HepG2 (cell line): ENCODE measurements at regions of chr2 and their contacts with region 1.

Region 1: DNA sequence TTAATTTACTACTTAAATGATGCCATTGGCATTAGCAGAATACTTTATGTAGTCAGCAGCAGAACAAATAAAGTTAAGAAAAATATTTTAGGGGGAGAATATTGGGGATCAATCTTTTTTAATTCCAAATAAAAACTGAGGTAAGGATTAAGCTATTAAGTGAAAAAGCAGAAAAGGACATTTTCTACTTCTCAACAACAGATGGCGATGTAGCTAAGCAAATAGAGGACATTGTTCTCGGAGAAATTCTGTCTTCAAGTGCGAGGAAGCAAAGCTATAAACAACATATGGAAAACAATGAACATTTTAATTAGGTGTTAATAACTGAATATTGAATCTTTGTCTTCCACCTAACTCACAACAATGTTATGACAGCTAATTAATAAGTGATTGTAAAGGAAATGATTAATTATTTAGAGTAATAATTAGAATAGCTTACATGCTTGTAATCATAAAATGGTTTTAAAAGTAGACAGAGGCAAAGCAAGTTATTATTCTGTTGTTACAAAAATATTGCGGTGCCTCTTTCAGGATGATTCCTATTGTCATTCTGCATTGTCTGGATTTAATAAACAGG is 32.9 kb upstream of the CCDC93 start:
- DNase-seq: peak; percentile 42
- ATAC-seq: peak; percentile 50; the same call in 1 of the 3 replicates
- H3K4me3 ChIP-seq: peak overlapping the region in 2 of 3 experiments; percentile 19 to 41; a peak in 3 of 6 replicates
- H3K27ac ChIP-seq: no peak overlapping the region
- H3K4me1 ChIP-seq: peaks cover 18% of the 10 kb centered on the region; the same call in 1 of the 2 replicates
- H3K27me3 ChIP-seq: no peaks in the 10 kb centered on the region; a peak in 1 of 5 replicates
- CTCF ChIP-seq: peak; percentile 82
- EP300 ChIP-seq: no peak
- POLR2A ChIP-seq: no peak
- RAD21 ChIP-seq: peak; percentile 70

Region 2: DNA sequence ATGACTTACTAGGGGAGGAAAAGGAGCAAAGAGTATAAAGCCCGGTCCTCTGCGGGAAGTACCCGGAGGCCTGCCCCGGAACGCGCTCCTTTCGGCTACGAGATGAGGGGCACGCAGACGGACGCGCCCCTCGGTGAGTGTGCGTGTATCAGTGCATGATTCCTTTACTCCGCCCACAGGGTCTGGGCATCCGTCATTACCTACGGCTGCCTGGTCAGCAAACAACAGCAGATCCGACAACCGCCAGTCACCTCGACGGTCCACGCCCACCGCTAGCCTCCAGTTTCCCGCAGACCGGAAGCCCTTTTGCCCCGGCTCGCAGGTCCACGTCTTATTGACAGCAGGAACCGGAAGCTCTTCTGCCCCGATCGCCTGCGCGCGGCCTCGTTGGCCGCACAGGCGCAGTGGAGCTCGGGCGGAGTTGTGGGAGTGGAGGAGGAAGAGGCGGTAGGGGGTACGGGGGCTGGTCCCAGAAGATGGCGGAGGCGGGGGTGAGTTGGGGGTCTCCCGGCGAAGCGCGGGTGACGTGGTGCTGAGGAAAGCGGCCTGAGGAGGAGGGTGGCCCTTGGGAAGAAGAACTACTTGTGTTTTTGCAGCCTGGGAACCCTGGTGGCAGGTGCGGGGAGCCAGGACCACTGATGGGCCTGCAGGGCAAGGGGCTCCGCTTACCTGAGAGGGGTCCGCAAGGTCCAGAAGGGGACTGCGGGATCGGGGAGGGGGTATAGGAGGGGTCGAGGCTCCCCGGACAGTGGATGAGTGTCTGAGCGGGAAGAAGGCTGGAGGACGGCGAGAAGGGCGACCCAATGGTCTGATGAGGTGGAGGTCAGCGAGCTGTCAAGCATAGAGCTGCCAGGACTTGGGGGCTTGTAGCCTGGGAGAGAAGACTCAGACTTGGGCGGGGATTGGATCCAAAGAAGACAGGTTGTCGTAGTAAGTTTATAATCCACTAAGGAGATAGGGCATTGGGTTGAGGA is 41.6 kb after region 1 on chr2 and contains the start of gene INSIG2:
- CTCF ChIA-PET with region 1: no interaction called
- POLR2A ChIA-PET with region 1: interaction called, 11 read pairs
- in situ Hi-C with region 1: no loop called
- intact Hi-C with region 1: loop called (anchors 2 kb)
- DNase-seq: peak; percentile 99
- ATAC-seq: peak; percentile 88
- H3K4me3 ChIP-seq: peak within 1 kb of the TSS; percentile 79 to 91 (median 89)
- H3K27ac ChIP-seq: peak within 1 kb of the TSS; percentile 91
- H3K4me1 ChIP-seq: peaks cover 61% of the 10 kb centered on the region
- H3K27me3 ChIP-seq: no peaks in the 10 kb centered on the region; a peak in 1 of 5 replicates
- CTCF ChIP-seq: no peak
- EP300 ChIP-seq: peak in 1 of 2 experiments; percentile 71; a peak in 2 of 4 replicates
- POLR2A ChIP-seq: peak; percentile 83 to 94
- RAD21 ChIP-seq: no peak
- total RNA-seq, gene INSIG2: 54.6 and 73.5 TPM in 2 replicates

Region 3: GRCh38 chr2:118133916-118134315 is 87.2 kb after region 1 on chr2:
- CTCF ChIA-PET with region 1: no interaction called
- POLR2A ChIA-PET with region 1: no interaction called
- in situ Hi-C with region 1: no loop called
- intact Hi-C with region 1: no loop called
- DNase-seq: no peak
- ATAC-seq: no peak
- H3K4me3 ChIP-seq: no peak overlapping the region
- H3K27ac ChIP-seq: no peak overlapping the region
- H3K4me1 ChIP-seq: peaks cover 10% of the 10 kb centered on the region
- H3K27me3 ChIP-seq: no peaks in the 10 kb centered on the region; a peak in 1 of 5 replicates
- CTCF ChIP-seq: no peak
- EP300 ChIP-seq: no peak
- POLR2A ChIP-seq: no peak
- RAD21 ChIP-seq: no peak

Region 4: DNA sequence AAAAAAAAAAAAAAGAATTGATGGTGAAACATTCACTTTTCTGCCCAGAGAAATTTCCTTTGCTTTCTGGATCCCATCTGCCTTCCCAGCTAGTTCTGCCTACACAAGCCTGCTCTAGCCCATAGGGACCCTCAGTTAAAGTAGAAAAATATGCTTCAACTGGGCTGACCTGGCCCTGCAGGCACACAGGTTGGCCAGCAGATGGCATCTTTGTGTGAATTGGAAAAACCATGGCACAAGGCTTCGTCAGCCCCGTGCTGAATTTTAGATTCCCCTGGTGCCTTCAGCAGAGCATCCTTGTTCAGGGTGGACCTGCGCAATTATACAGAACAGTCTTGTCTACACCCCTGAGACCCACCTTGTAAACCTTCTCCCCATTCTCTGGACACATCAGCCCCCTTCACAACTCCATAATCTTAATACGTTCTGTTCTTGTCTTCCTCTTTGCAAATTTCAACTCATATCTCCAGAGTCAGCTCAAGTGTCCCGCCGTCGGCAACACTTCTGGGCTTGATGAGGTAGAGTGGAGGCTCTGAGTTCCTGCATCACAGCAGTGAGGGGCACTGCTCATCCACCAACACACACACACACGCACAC is 156.1 kb after region 1 on chr2:
- CTCF ChIA-PET with region 1: interaction called, 9 read pairs
- POLR2A ChIA-PET with region 1: no interaction called
- in situ Hi-C with region 1: no loop called
- intact Hi-C with region 1: loop called (anchors 1 kb)
- DNase-seq: peak; percentile 54
- ATAC-seq: peak; percentile 96
- H3K4me3 ChIP-seq: no peak overlapping the region
- H3K27ac ChIP-seq: no peak overlapping the region
- H3K4me1 ChIP-seq: no peaks in the 10 kb centered on the region
- H3K27me3 ChIP-seq: no peaks in the 10 kb centered on the region
- CTCF ChIP-seq: peak; percentile 78
- EP300 ChIP-seq: no peak
- POLR2A ChIP-seq: no peak
- RAD21 ChIP-seq: 0 out of 2 replicates have a peak, but pooled peaks have one; percentile 45

Region 5: DNA sequence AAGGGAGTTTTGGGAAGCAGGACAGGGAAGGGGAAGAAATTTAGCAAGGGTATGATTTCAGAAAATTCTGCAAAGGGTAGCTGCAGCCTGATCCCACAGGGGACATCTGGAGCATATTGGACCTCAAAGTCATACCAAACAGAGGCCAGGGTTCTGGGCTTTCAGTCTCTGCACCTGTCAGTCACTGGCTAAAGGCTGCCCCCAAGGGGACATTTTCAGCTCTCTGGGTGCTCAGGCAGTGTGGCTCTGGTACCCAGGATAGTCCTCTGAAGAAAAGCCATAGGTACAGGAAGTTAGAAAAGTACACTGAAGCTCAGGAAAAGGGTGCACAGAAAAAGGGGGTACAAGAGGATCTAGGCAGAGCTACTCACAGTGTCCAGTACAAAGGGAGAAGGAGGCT is 190.7 kb after region 1 on chr2:
- CTCF ChIA-PET with region 1: no interaction called
- POLR2A ChIA-PET with region 1: no interaction called
- in situ Hi-C with region 1: no loop called
- intact Hi-C with region 1: loop called (anchors 1 kb)
- DNase-seq: no peak
- ATAC-seq: peak; percentile 81
- H3K4me3 ChIP-seq: no peak overlapping the region
- H3K27ac ChIP-seq: no peak overlapping the region
- H3K4me1 ChIP-seq: no peaks in the 10 kb centered on the region
- H3K27me3 ChIP-seq: peaks cover 0 to 5% of the 10 kb centered on the region in 2 experiments; a peak in 1 of 5 replicates
- CTCF ChIP-seq: peak; percentile 51
- EP300 ChIP-seq: no peak
- POLR2A ChIP-seq: no peak
- RAD21 ChIP-seq: no peak

Region 6: DNA sequence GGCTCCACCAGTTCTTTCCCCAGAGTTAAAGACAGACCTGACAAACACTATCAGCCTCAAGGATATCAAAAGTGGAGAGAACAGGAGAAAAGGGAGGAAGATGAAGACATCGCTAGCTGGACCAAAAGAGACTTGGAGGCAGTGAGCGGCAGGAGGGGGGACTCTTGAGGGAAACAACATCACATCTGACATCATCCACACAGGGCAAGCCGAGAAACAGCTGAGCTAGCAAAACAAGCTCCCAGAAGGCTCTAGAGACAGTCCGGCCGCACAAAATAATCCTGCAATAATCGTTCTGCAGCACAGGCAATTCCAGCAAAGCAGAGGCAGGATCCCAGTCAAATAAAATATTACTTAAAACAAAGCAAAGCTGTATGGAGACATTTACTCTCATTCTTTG is 560.9 kb after region 1 on chr2:
- CTCF ChIA-PET with region 1: no interaction called
- POLR2A ChIA-PET with region 1: no interaction called
- in situ Hi-C with region 1: no loop called
- intact Hi-C with region 1: no loop called
- DNase-seq: no peak
- ATAC-seq: no peak
- H3K4me3 ChIP-seq: no peak overlapping the region
- H3K27ac ChIP-seq: no peak overlapping the region
- H3K4me1 ChIP-seq: peaks cover 11% of the 10 kb centered on the region
- H3K27me3 ChIP-seq: no peaks in the 10 kb centered on the region
- CTCF ChIP-seq: no peak
- EP300 ChIP-seq: no peak
- POLR2A ChIP-seq: no peak
- RAD21 ChIP-seq: no peak

Region 7: DNA sequence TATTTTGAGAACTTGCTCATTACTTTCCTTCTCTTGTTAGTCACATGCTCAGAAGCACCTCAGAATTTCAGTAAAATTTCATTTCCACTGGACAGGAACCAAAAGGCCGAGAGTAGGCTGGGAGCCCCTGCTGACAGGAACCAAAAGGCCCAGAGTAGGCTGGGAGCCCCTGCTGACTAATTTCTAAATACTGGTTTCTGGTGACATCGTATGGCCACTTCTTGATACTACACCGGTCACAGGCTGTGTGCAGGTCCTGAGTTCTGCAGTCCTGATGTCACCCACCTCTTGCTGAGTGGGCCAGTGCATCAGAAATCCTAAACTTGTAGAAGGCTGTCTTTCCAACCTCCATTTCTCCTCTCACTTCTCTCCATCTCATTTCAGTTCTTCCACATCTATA is 818.4 kb after region 1 on chr2:
- CTCF ChIA-PET with region 1: no interaction called
- POLR2A ChIA-PET with region 1: no interaction called
- in situ Hi-C with region 1: no loop called
- intact Hi-C with region 1: loop called (anchors 5 kb)
- DNase-seq: peak; percentile 56
- ATAC-seq: peak; percentile 99
- H3K4me3 ChIP-seq: no peak overlapping the region
- H3K27ac ChIP-seq: no peak overlapping the region
- H3K4me1 ChIP-seq: no peaks in the 10 kb centered on the region
- H3K27me3 ChIP-seq: peaks cover 4 to 32% of the 10 kb centered on the region in 2 experiments; a peak in 3 of 5 replicates
- CTCF ChIP-seq: peak; percentile 81
- EP300 ChIP-seq: no peak
- POLR2A ChIP-seq: no peak
- RAD21 ChIP-seq: peak; percentile 81; the same call in 1 of the 2 replicates